ENCODE measurements at regions of chr9 and their contacts with region 1.

Region 1: DNA sequence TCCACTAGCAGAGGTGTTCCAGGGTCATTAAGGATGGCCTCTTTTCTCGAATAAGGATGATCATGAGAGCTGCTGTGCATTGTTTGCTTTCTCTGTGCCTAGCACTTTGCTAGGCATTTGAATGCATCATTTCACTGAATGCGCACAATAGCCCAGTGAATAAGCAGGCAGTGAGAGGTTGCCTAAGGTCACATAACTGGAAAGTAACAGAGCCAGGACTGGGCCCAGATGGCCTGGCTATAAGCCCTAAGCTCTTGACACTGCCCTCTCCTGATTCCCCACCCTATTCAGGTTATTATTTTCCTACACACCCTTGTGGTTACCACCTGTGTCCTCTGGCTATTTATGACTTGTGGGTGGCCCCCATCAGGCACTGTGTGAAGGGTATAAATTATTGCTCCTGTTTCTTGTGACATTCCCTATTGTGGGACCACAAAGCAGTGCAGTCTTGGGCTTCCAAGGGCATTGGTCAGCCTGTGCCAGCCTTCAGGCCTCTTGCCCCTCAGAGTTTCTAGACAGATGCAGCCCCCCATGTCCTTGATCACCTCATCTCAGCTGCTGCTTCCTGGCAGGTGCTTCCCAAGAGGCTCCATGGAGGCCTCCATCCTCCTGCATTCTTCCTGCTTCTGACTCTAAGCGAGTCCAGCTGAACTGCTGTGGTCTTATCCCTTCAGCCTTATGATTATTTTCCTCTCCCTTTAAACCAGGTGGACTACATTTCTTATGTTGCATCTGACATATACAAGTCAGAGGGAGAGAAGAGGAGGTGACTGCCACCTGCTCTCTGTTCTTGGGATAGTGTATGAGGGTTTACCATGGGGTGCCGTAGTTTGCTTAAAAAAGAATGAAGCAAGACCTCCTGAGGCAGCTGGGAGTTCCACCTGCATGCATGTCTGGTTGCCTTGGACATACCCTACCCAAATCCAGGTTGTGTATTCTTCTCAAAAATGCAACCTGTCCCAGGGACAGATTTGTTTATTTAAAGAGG is 47.6 kb downstream of the ANGPTL2 start:
- DNase-seq: peak; percentile 24 to 54
- ATAC-seq: peak; percentile 79 to 93
- H3K4me3 ChIP-seq: no peak overlapping the region
- H3K27ac ChIP-seq: peak overlapping the region in 3 of 4 donors; percentile 41 to 67 (median 41)
- H3K4me1 ChIP-seq: peaks cover 29 to 31% of the 10 kb centered on the region in 2 donors
- H3K27me3 ChIP-seq: no peaks in the 10 kb centered on the region
- CTCF ChIP-seq: no peak
- POLR2A ChIP-seq: no peak

Region 2: GRCh38 chr9:127035951-127036350 is 38.9 kb before region 1 on chr9:
- in situ Hi-C with region 1: no loop called
- intact Hi-C with region 1: loop called (anchors 5 kb)
- DNase-seq: peak; percentile 23 to 61
- ATAC-seq: peak; percentile 62 to 73
- H3K4me3 ChIP-seq: no peak overlapping the region
- H3K27ac ChIP-seq: peak overlapping the region; percentile 45 to 68 (median 58)
- H3K4me1 ChIP-seq: peaks cover 19 to 32% of the 10 kb centered on the region in 2 donors
- H3K27me3 ChIP-seq: no peaks in the 10 kb centered on the region
- CTCF ChIP-seq: no peak
- POLR2A ChIP-seq: no peak

Region 3: GRCh38 chr9:127199001-127199791 is 124.3 kb after region 1 on chr9:
- in situ Hi-C with region 1: no loop called
- intact Hi-C with region 1: no loop called
- DNase-seq: peak; percentile 47 to 73
- ATAC-seq: peak; percentile 69 to 75
- H3K4me3 ChIP-seq: no peak overlapping the region
- H3K27ac ChIP-seq: peak overlapping the region in 2 of 4 donors; percentile 7 to 51
- H3K4me1 ChIP-seq: peaks cover 29 to 41% of the 10 kb centered on the region in 2 donors
- H3K27me3 ChIP-seq: no peaks in the 10 kb centered on the region
- CTCF ChIP-seq: peak; percentile 87 to 99 (median 94)
- POLR2A ChIP-seq: no peak

Region 4: GRCh38 chr9:127244609-127245601 is 170.1 kb after region 1 on chr9:
- in situ Hi-C with region 1: no loop called
- intact Hi-C with region 1: no loop called
- DNase-seq: peak; percentile 96 to 97
- ATAC-seq: peak; percentile 97 to 98
- H3K4me3 ChIP-seq: peak overlapping the region; percentile 61 to 85 (median 72)
- H3K27ac ChIP-seq: peak overlapping the region; percentile 81 to 95 (median 86)
- H3K4me1 ChIP-seq: peaks cover 5 to 12% of the 10 kb centered on the region in 2 donors
- H3K27me3 ChIP-seq: no peaks in the 10 kb centered on the region
- CTCF ChIP-seq: no peak
- POLR2A ChIP-seq: peak; percentile 43 to 61

Measured in gastrocnemius medialis (tissue), 4 donors.